ENCODE measurements at regions of chr9 and their contacts with region 1.

Region 1: GRCh38 chr9:125558453-125559092 is 148.4 kb downstream of the MAPKAP1 start:
- DNase-seq: peak; percentile 77
- H3K4me3 Mint-ChIP-seq: no peak overlapping the region
- H3K27ac Mint-ChIP-seq: peak overlapping the region; percentile 35
- H3K4me1 Mint-ChIP-seq: no peaks in the 10 kb centered on the region
- H3K27me3 Mint-ChIP-seq: no peaks in the 10 kb centered on the region
- CTCF ChIP-seq: peak; percentile 88

Region 2: GRCh38 chr9:125544988-125545651 is 13.5 kb before region 1 on chr9:
- CTCF ChIA-PET with region 1: interaction called, 42 read pairs
- POLR2A ChIA-PET with region 1: interaction called, 4 read pairs
- intact Hi-C with region 1: no loop called
- DNase-seq: peak; percentile 11
- H3K4me3 Mint-ChIP-seq: no peak overlapping the region
- H3K27ac Mint-ChIP-seq: no peak overlapping the region
- H3K4me1 Mint-ChIP-seq: peaks cover 33% of the 10 kb centered on the region
- H3K27me3 Mint-ChIP-seq: no peaks in the 10 kb centered on the region
- CTCF ChIP-seq: no peak

Region 3: GRCh38 chr9:125574126-125574877 is 15.7 kb after region 1 on chr9:
- CTCF ChIA-PET with region 1: interaction called, 23 read pairs
- POLR2A ChIA-PET with region 1: interaction called, 3 read pairs
- intact Hi-C with region 1: no loop called
- DNase-seq: no peak
- H3K4me3 Mint-ChIP-seq: no peak overlapping the region
- H3K27ac Mint-ChIP-seq: no peak overlapping the region
- H3K4me1 Mint-ChIP-seq: no peaks in the 10 kb centered on the region
- H3K27me3 Mint-ChIP-seq: no peaks in the 10 kb centered on the region
- CTCF ChIP-seq: no peak

Region 4: GRCh38 chr9:125631391-125632085 is 73.0 kb after region 1 on chr9:
- CTCF ChIA-PET with region 1: interaction called, 3 read pairs
- POLR2A ChIA-PET with region 1: no interaction called
- intact Hi-C with region 1: loop called (anchors 1 kb)
- DNase-seq: peak; percentile 56
- H3K4me3 Mint-ChIP-seq: no peak overlapping the region
- H3K27ac Mint-ChIP-seq: no peak overlapping the region
- H3K4me1 Mint-ChIP-seq: peaks cover 43% of the 10 kb centered on the region
- H3K27me3 Mint-ChIP-seq: no peaks in the 10 kb centered on the region
- CTCF ChIP-seq: peak; percentile 38

Region 5: GRCh38 chr9:125746017-125746773 is 187.6 kb after region 1 on chr9:
- CTCF ChIA-PET with region 1: interaction called, 5 read pairs
- POLR2A ChIA-PET with region 1: no interaction called
- intact Hi-C with region 1: loop called (anchors 1 kb)
- DNase-seq: peak; percentile 97
- H3K4me3 Mint-ChIP-seq: peak overlapping the region; percentile 84
- H3K27ac Mint-ChIP-seq: peak overlapping the region; percentile 36
- H3K4me1 Mint-ChIP-seq: peaks cover 24% of the 10 kb centered on the region
- H3K27me3 Mint-ChIP-seq: no peaks in the 10 kb centered on the region
- CTCF ChIP-seq: no peak

Region 6: DNA sequence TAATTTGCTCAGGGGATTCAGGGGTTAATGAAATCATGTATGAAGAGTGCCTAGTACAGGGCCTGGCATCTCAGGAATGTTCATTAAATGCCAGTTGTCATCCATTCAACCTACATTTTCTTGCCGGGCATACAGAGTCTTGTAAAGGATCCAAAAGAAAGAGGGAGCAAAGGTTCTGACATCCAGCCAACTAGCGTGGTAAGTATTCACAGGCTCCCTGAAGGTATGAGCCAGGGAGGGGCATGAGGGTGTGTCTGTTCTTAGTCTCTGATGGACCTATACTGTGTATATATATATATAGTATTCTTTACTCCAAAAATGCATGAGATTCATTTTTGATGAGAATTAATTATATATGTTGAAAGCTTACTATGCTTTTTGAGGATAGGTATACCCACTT is 390.7 kb after region 1 on chr9:
- CTCF ChIA-PET with region 1: no interaction called
- POLR2A ChIA-PET with region 1: no interaction called
- intact Hi-C with region 1: loop called (anchors 5 kb)
- DNase-seq: peak; percentile 85
- H3K4me3 Mint-ChIP-seq: no peak overlapping the region
- H3K27ac Mint-ChIP-seq: no peak overlapping the region
- H3K4me1 Mint-ChIP-seq: peaks cover 19% of the 10 kb centered on the region
- H3K27me3 Mint-ChIP-seq: no peaks in the 10 kb centered on the region
- CTCF ChIP-seq: no peak

Region 7: DNA sequence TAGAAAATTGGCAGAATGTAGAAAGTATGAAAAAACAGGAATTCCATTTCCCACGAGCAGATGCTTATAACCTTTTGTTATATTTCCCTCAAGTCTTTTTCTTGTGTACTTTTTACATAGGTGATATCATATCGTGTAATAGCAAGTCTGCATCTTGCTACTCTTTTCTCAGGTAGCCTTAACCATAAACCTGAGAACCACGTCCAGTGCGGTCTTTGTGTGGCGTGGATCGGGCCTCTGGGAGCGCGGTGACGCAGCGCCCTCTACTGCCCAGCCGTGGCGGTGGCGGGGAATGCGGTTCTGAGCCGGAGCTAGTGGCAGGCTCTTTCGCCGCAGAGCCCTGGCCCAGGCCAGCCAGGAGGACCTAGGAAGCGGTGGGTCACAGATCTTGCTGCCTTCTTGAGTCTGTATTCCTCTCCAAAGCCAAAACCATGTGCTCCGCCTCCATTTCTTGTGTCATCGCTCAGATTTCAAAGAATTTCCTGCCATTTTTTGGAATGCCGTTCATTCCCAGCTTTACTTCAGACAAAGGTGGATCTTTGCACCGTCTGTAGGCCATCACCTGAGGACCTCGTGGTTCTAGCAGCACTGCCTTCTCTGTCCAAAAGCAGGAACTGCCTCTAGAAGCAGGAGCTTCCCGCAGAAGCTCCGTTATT is 840.0 kb after region 1 on chr9:
- CTCF ChIA-PET with region 1: interaction called, 3 read pairs
- POLR2A ChIA-PET with region 1: no interaction called
- intact Hi-C with region 1: loop called (anchors 1 kb)
- DNase-seq: peak; percentile 68
- H3K4me3 Mint-ChIP-seq: no peak overlapping the region
- H3K27ac Mint-ChIP-seq: no peak overlapping the region
- H3K4me1 Mint-ChIP-seq: no peaks in the 10 kb centered on the region
- H3K27me3 Mint-ChIP-seq: no peaks in the 10 kb centered on the region
- CTCF ChIP-seq: peak; percentile 94

Measured in MCF 10A (cell line).